Prostate gland (tissue), 2 donors: ENCODE measurements at regions of chr15 and their contacts with region 1.

Region 1: GRCh38 chr15:39580117-39580484 is 778 bp upstream of the THBS1 start:
- DNase-seq: peak; percentile 95
- H3K4me3 ChIP-seq: peak overlapping the region; percentile 50 to 54
- H3K27ac ChIP-seq: peak overlapping the region; percentile 84 to 88
- H3K4me1 ChIP-seq: peaks cover 5% of the 10 kb centered on the region
- H3K27me3 ChIP-seq: no peaks in the 10 kb centered on the region
- CTCF ChIP-seq: peak; percentile 98 to 99 (median 98)
- POLR2A ChIP-seq: peak; percentile 33

Region 2: GRCh38 chr15:38817427-38818156 is 762.5 kb before region 1 on chr15:
- intact Hi-C with region 1: loop called (anchors 1 kb)
- DNase-seq: peak; percentile 88
- H3K4me3 ChIP-seq: no peak overlapping the region
- H3K27ac ChIP-seq: no peak overlapping the region
- H3K4me1 ChIP-seq: no peaks in the 10 kb centered on the region
- H3K27me3 ChIP-seq: no peaks in the 10 kb centered on the region
- CTCF ChIP-seq: peak; percentile 97 to 99 (median 98)
- POLR2A ChIP-seq: no peak

Region 3: DNA sequence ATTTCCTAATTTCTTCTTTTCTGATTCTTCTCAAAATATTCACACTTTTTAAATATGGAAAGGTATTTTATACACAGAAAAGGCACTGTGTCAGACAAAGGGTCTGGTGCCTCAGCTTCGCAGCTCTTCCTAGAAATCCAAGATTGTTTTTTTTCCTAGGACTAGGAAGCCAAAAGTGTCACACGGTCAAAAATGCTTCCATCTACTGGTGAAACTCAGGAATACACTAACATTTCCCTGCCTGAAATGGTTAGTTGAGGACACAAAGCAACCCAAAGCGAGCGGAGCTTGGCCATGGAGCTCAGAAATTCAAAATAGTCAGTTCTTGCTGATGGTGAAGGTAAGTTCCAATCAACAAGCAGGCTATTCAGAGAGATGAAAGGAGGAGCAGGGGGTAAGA is 589.0 kb before region 1 on chr15:
- intact Hi-C with region 1: loop called (anchors 10 kb)
- DNase-seq: no peak
- H3K4me3 ChIP-seq: no peak overlapping the region
- H3K27ac ChIP-seq: no peak overlapping the region
- H3K4me1 ChIP-seq: no peaks in the 10 kb centered on the region
- H3K27me3 ChIP-seq: no peaks in the 10 kb centered on the region
- CTCF ChIP-seq: peak in 3 of 4 experiments; percentile 36 to 54 (median 38)
- POLR2A ChIP-seq: no peak

Region 4: DNA sequence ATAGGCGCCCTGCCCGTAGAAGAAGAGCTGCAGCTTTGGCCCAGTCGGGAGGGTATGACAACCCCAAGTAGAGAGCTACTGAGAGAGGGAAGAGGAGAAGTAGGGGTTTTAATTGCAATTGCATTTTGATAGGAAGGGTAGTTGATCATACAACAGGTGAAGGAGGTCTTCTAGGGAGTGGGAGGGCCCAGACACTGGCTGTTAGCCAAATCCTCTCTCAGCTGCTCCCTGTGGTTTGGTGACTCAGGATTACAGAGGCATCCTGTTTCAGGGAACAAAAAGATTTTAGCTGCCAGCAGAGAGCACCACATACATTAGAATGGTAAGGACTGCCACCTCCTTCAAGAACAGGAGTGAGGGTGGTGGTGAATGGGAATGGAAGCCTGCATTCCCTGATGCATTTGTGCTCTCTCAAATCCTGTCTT is 408.1 kb before region 1 on chr15:
- intact Hi-C with region 1: loop called (anchors 2 kb)
- DNase-seq: peak; percentile 73
- H3K4me3 ChIP-seq: no peak overlapping the region
- H3K27ac ChIP-seq: peak overlapping the region; percentile 22 to 46
- H3K4me1 ChIP-seq: peaks cover 9% of the 10 kb centered on the region
- H3K27me3 ChIP-seq: no peaks in the 10 kb centered on the region
- CTCF ChIP-seq: peak in 2 of 4 experiments; percentile 72 to 75
- POLR2A ChIP-seq: no peak

Region 5: DNA sequence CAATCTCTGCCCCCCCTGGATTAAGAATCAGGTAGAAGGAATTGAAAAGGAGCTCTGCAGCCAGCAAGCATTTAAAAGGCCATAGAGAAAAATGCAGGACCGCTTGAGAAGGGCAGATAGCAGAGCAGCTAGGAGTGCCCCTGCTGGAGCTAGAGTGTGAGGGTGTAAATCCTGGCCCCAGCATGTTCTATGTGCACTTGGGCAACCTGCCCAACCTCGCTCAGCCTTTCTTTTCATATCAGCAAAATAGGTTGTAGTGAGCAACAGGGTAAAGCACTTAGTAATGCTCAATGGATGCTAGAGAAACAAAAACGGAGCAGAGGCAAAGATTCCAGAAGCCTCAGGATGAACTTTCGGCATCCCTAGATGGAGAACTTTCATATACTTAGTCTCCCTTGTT is 24.2 kb before region 1 on chr15:
- intact Hi-C with region 1: loop called (anchors 2 kb)
- DNase-seq: no peak
- H3K4me3 ChIP-seq: no peak overlapping the region
- H3K27ac ChIP-seq: no peak overlapping the region
- H3K4me1 ChIP-seq: peaks cover 12% of the 10 kb centered on the region
- H3K27me3 ChIP-seq: no peaks in the 10 kb centered on the region
- CTCF ChIP-seq: no peak
- POLR2A ChIP-seq: no peak